G401 (cell line): ENCODE measurements at regions of chr22 and their contacts with region 1.

Region 1: DNA sequence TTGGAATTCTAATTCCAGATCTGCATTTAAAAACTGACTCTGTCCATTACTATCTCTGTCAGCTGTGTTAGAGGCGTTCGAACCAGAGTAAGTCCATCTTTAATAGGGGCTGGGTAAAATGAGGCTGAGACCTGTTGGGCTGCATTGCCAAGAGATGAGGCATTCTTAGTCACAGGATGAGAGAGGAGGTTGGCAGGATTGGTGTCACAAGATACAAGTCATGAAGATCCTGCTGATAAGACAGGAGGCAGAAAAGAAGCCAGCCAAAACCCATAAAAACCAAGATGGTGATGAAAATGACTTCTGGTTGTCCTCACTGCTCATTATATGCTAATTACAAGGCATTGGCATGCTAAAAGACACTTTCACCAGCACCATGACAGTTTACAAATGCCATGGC is 356.3 kb upstream of the ISX start:
- DNase-seq: no peak

Region 2: DNA sequence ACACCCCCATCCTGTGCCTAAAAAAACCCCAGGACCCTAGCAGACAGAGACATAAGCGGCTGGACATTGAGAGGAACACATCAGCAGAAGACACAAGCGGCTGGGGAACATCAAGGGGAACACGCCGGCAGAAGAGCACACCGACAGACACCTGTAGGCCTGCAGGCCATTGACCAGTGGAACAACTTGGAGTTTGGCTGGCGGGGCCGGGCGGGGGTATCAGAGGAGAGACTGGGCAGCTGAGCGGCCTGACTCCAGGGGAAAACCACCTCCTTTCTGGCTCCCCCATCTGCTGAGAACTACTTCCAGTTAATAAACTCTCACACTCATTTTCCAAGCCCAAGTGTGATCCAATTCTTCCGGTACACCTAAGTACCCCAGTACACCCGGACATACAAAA is 91.6 kb after region 1 on chr22:
- in situ Hi-C with region 1: no loop called
- DNase-seq: no peak

Region 3: DNA sequence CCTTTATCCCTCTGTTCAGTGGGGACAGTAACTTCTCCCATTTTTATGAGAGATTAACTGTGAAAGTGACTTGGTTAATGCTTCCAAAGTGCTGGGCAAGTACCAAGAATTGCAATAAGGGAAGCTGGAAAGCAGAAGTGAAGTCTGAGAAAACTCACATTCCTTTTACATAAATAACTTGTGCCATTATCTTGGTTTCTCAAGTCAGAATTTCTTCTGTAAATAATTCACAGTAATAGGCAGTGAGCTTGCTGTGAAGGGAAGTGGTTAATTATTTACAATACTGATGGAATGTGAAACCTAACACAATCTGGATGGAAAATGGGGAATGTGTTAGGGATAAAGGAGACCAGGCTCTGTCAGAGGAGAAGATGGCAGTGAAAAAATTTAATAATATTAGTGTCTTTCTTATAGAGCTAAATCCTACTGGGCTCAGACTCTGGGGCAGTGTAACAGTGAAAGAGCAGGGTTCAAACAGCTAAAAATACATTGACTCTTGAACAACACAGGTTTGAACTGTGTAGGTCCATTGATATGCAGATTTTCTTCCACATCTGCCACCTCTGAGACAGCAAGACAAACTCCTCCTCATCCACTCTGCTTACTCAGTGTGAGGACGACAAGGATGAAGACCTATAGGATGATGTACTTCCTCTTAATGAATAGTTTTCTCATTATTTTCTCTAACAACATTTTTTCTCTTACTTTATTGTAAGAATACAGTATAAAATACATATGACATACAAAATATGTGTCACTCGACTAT is 104.8 kb after region 1 on chr22:
- in situ Hi-C with region 1: no loop called
- DNase-seq: no peak

Region 4: GRCh38 chr22:34829485-34829884 is 119.8 kb after region 1 on chr22:
- in situ Hi-C with region 1: loop called (anchors 10 kb)
- DNase-seq: no peak